Left ventricle myocardium superior (tissue), 1 donor: ENCODE measurements at regions of chr3 and their contacts with region 1.

Region 1: GRCh38 chr3:52001443-52001974 is 5.8 kb upstream of the RPL29 start:
- DNase-seq: peak; percentile 87
- ATAC-seq: peak; percentile 69

Region 2: DNA sequence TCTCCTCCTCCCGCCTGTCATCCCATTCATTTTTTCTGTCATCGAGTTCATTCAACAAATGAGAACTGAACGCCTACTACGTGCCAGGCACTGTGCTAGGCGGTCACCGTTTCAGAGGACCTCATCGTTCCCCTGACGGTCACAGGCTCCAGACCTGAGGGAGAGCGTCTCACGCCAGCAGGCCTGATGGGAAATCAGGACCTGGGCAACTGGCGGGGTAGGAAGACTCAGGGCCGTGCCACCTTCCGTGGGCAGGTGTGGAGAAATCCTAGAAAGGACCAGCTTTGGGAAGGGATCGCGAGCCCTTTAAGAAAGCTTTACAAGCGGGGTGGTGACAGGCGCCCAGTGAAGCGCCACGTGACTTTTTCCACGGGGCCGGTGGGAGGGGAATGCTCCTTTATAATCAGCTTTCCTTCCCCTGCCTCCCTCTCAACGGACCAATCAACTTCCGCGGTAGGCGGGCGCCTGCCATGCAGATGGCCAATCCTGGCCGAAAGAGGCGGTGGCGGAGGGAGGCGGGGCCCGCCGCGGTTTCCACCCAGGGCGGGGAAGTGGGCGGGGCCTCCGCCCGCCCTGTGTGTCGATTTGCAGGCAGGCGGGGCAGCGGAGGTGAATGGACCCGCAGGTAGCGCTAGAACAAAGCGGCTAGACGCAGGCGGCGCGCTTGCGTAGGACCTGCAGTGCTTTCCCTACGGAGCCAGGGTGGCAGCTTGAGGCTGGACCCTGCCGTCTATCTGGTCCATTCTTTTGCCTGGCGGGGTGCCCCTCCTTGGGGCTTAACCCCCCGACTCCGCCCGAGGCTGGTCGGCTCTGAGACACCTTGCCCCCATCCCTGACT is 55.7 kb after region 1 on chr3:
- intact Hi-C with region 1: loop called (anchors 10 kb)
- DNase-seq: peak; percentile 100
- ATAC-seq: peak; percentile 87

Region 3: GRCh38 chr3:52123106-52123725 is 121.7 kb after region 1 on chr3:
- intact Hi-C with region 1: loop called (anchors 5 kb)
- DNase-seq: peak; percentile 86
- ATAC-seq: peak; percentile 81

Region 4: GRCh38 chr3:52144034-52144795 is 142.7 kb after region 1 on chr3:
- intact Hi-C with region 1: loop called (anchors 2 kb)
- DNase-seq: peak; percentile 89
- ATAC-seq: peak; percentile 78

Region 5: DNA sequence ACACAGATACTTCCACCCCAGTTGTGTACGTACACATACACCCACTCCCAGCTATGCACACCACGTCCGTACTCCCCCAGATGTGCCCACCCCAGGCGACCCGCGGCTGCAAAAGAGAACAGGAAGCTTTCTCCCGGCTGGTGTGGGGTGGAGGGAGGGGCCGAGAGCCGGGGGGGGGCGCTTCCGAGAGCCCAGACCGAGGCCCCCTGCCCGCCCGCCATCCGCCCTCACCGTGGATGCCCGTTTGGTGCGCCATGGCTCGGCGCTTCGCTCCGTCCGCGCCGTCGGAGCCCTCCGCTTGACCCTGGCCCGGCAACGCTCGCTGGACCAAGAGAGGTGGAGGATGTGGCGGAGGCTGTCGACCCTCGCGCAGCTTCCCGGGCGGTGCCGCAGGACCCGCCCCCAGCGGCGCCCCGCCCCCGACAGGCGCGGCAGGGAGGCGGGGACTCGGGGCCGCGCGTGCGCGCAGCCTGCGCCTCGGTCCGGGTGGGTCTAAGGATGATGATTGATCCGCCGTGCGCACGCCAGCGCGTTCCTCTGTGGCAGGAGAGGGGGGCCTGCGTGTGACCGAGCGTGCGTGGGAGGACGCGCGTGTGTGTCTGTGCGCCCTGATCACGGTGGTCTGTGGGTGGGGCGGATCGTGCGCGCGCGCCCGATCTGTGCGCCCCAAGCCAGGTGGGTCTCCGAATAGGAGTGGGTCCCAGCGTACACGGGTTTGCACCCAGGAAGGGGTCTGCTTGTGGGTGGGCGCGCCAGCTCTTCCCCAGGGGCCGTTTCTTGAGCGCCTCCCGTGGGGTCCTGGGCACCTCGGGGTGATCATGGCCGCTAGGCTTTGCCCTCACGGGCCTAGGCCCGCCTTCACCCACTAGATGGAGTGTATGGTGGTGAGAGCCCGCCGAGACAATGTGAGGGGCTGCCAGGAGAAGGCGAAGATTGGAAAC is 237.5 kb after region 1 on chr3 and contains the start of gene TWF2:
- intact Hi-C with region 1: no loop called
- DNase-seq: peak; percentile 90
- ATAC-seq: peak; percentile 79
- total RNA-seq, gene TWF2: 103 TPM

Region 6: DNA sequence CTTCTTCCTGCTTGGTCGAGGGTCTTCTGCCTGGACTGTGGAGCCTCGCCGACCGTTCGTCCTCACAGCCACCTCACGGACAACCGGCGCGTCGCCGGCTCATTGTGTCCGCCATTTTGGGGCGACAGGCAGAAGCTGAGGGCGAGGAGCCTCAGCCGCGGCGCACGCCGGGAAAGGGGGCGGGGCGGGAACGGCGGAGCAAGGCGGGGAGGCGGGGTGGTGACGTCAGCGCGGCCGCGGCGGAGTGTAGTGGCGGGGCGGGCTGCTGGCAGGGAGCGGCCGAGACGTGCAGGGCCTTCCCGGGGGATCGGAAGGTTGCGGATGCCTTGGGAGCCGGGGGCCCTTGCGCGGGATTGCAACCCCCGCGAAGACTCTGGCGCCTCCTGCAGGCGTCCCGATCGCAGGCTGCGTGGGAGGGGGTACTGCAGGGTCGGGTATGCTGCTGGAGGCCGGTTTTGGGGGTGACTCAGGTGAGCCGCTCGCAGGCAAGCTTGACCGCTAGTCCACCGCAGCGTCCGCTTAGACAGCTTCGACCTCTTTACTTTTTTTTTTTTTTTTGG is 277.1 kb after region 1 on chr3 and contains the start of gene WDR82:
- intact Hi-C with region 1: no loop called
- DNase-seq: peak; percentile 99
- ATAC-seq: peak; percentile 95
- total RNA-seq, gene WDR82: 67.5 TPM